Mucosa of descending colon (tissue), 3 donors: ENCODE measurements at regions of chr2 and their contacts with region 1.

Region 1: DNA sequence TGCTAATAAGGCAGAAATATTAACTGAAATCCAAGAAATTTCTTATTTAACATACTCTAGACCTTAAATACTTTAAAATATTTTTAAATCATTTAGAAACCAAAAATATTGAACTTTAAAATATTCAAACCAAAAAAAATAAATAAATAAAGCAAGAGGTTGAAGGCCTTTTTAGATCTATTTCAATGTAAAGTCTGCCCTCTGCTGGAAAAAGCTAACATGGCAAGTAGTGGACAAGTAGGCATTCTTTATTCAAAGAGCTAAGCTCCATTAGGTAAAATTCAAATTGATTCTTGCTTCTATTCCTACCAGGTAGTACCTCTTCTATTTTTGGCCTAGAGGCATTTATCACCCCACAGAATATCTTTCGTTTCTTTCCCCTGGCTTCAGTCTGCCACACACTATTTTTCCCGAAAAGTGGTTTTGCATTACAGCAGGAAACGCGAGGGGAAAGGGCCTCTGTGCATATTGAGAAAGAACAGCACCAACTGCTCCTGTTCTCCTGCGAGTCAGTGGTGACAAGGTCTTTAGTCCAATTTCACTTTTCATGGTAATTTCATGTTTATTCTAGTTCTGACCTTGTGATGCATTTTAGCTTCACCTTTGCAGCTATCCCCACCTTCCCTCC is 20.4 kb downstream of the IFIH1 start:
- DNase-seq: peak in 1 of 3 donors; percentile 95
- ATAC-seq: peak; percentile 70
- H3K4me3 ChIP-seq: no peak overlapping the region
- H3K4me1 ChIP-seq: no peaks in the 10 kb centered on the region
- CTCF ChIP-seq: peak; percentile 54

Region 2: GRCh38 chr2:162153608-162154224 is 144.3 kb before region 1 on chr2:
- intact Hi-C with region 1: loop called in 1 of 2 experiments (anchors 5 kb)
- DNase-seq: peak in 1 of 3 donors; percentile 88
- ATAC-seq: peak; percentile 87
- H3K4me3 ChIP-seq: no peak overlapping the region
- H3K4me1 ChIP-seq: no peaks in the 10 kb centered on the region
- CTCF ChIP-seq: peak; percentile 66

Region 3: DNA sequence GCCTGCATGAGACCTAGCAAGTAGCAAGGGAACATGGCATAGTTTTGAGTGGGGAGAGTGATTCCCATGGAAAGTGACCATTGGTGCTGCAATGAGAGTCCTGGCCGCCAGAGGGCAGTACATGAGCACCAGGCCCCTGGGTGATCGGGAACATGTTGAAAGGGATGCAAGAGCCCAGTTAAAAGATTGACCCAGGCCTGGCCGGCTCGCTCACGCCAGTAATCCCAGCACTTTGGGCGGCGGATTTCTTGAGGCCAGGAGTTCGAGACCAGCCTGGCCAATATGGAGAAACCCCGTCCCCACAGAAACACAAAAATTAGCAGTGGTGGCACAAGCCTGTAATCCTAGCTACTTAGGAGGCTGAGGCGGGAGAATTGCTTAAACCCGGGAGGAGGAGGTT is 77.0 kb before region 1 on chr2:
- intact Hi-C with region 1: loop called (anchors 5 to 10 kb)
- DNase-seq: peak; percentile 54 to 72 (median 69)
- ATAC-seq: peak; percentile 82
- H3K4me3 ChIP-seq: no peak overlapping the region
- H3K4me1 ChIP-seq: no peaks in the 10 kb centered on the region
- CTCF ChIP-seq: peak; percentile 77

Region 4: GRCh38 chr2:162677476-162677875 is 379.4 kb after region 1 on chr2:
- intact Hi-C with region 1: no loop called
- DNase-seq: no peak
- ATAC-seq: no peak
- H3K4me3 ChIP-seq: no peak overlapping the region
- H3K4me1 ChIP-seq: no peaks in the 10 kb centered on the region
- CTCF ChIP-seq: no peak